ENCODE measurements at regions of chr12 and their contacts with region 1.

Region 1: DNA sequence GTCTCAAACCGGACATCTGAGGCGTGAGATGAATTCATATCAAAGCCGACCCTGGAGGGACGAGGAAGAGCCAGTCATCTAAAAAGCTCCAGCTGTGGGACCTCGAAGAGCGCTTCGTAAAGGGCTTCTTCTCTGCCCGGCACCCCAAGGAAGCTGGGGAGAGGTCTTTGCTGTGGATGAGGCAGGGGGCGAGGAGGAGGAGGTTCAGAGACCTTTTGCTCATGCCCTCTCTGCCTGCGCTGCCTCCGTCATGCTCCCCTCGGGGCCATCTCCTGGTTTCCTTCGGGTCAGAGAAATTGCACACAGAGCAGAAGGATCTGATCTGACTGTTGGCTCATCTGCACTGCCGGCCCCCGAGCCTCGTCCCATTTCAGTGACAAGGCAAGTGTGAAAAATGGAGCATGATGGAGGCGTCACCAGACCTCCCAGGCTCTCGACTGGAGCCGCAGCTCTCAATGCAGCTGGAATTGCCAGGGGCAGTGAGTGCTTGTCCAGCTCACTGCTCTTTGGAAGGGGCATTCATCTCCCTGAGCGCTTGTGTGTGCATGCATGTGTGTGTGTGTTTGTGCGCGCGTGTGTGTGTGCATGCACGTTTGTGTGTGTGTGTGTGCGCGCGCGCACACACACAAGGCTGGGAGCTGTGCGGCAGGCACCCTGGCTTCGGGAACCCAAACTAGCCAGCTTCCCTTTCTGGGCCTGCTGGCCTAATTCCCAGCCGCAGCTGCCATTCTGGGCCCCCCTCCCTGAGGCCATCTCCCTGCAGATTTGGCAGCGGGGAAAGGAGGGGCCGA is 9.2 kb downstream of the CABP1 start:
- DNase-seq: no peak
- ATAC-seq: no peak
- H3K4me3 ChIP-seq: no peak overlapping the region
- H3K27ac ChIP-seq: no peak overlapping the region
- H3K4me1 ChIP-seq: peaks cover 5% of the 10 kb centered on the region
- H3K27me3 ChIP-seq: peaks cover 19% of the 10 kb centered on the region
- CTCF ChIP-seq: peak; percentile 8

Region 2: DNA sequence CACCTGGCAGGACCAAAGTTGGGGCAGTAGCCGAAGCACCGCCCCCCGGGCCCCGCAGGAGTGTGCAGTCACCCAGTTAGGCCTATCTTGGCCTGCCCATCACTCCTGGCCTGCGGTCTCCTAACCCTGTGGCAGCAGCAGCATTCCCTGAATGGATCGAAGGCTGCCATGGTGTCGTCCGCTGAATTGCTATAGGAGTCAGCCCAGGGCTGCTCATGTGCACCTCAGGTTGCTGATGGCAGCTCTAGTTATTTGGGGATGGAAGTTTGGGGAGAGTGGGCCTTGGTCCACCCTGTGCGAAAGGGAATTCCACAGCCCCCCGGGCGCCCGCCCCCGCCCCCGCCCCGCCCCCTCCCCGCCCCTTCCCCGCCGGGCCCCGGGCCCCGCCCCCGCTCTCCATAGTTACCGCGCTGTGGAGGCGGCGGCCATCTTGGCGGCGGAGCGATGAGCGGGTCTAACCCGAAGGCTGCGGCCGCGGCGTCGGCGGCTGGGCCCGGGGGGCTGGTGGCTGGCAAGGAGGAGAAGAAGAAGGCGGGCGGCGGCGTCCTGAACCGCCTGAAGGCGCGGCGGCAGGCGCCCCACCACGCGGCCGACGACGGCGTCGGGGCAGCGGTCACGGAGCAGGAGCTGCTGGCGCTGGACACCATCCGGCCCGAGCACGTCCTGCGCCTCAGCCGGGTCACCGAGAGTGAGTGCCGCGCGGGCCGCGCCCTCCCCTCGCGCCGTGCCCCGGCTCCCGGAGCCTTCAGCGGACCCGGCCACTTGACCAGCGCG is 60.6 kb after region 1 on chr12 and contains the start of gene UNC119B:
- intact Hi-C with region 1: loop called (anchors 5 kb)
- DNase-seq: peak; percentile 89
- ATAC-seq: peak; percentile 92
- H3K4me3 ChIP-seq: peak within 1 kb of the TSS; percentile 90
- H3K27ac ChIP-seq: peak within 1 kb of the TSS; percentile 84
- H3K4me1 ChIP-seq: peaks cover 16% of the 10 kb centered on the region
- H3K27me3 ChIP-seq: no peaks in the 10 kb centered on the region
- CTCF ChIP-seq: no peak
- total RNA-seq, gene UNC119B: 23.0 TPM

Region 3: DNA sequence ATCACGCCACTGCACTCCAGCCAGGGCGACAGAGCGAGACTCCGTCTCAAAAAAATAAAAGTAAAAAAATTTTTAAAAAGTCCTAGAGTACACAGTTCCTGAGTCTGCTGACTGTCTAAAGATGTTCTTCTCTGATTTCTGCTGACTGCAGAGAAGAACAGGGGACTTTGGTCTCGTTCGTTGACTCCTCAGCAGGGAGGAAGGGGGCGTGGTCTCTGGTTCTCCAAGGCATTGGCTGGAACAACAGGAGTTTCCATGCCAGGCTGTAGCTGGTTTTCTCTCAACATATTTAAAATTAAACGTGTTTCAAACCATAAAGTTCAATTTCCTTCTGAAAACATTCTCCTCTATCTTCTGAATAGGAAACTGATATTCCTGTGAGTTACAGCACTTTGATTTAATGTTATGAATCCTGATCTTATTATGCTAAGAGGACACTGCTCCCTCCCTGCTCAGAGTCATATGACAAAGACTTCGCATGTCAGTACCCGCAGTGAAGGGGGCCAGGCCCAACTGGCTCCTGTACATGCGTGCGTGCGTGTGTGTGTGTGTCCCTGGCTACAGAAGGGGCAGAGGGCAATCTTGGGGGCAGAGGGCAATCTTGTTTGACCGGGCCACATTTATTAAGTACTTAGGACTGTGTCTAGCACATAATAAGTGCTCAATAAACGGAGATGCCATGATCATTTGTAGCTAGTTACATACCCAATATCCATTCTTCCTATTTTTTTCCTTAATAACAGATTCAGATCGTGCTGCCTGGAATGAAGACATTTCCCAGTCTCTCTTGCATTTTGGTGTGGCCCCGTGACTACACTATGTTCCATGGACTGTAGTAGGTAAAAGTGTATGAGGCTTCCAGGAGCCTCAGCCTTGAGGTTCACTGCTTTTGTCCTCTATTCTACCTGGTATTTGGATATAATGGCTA is 312.2 kb after region 1 on chr12:
- intact Hi-C with region 1: loop called (anchors 10 kb)
- DNase-seq: no peak
- ATAC-seq: no peak
- H3K4me3 ChIP-seq: no peak overlapping the region
- H3K27ac ChIP-seq: no peak overlapping the region
- H3K4me1 ChIP-seq: no peaks in the 10 kb centered on the region
- H3K27me3 ChIP-seq: no peaks in the 10 kb centered on the region
- CTCF ChIP-seq: no peak

Measured in upper lobe of right lung (tissue), 1 donor.